ENCODE measurements at regions of chr20 and their contacts with region 1.

Region 1: DNA sequence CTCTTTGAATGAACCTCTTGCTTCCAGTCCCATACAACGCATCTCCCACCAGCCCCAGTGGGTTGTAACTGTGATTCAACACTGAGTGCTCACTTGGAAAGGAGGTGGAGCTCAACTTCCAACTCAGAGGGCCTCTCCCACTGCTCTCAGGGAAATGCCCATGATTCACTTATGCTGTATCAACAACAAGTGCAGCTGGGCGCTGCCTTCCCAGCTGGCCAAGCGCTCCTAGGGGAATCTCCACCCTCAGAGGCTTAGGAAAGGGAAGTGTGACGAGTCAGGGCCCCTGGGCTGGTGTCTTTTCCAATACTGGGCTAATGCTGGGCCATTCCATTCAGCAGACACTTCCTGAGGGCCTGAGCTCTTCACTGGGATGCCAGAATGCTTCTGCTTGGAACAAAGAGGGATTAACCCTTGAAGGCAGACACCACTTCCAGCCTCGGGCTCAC is 8.1 kb upstream of the OCSTAMP start:
- DNase-seq: peak; percentile 47
- ATAC-seq: no peak

Region 2: GRCh38 chr20:46689082-46689754 is 130.7 kb after region 1 on chr20 and contains the start of gene TP53RK:
- intact Hi-C with region 1: loop called (anchors 10 kb)
- DNase-seq: peak; percentile 99
- ATAC-seq: peak; percentile 98
- total RNA-seq, gene TP53RK: 5.0 TPM